K562 (cell line): ENCODE measurements at regions of chr1 and their contacts with region 1.

Region 1: GRCh38 chr1:26138974-26139558 is 19.8 kb upstream of the FAM110D start:
- DNase-seq: peak in 3 of 4 experiments; percentile 46 to 67 (median 55)
- ATAC-seq: peak; percentile 80
- H3K4me3 ChIP-seq: no peak overlapping the region
- H3K27ac ChIP-seq: peak overlapping the region; percentile 74
- H3K4me1 ChIP-seq: peaks cover 14 to 23% of the 10 kb centered on the region in 2 experiments; a peak in 4 of 5 replicates
- H3K27me3 ChIP-seq: no peaks in the 10 kb centered on the region
- CTCF ChIP-seq: no peak
- EP300 ChIP-seq: no peak
- POLR2A ChIP-seq: no peak
- RAD21 ChIP-seq: no peak

Region 2: GRCh38 chr1:24946861-24947658 is 1192.0 kb before region 1 on chr1:
- CTCF ChIA-PET with region 1: no interaction called
- POLR2A ChIA-PET with region 1: no interaction called
- in situ Hi-C with region 1: no loop called
- intact Hi-C with region 1: no loop called
- DNase-seq: no peak
- ATAC-seq: no peak; the same call in 2 of the 3 replicates
- H3K4me3 ChIP-seq: no peak overlapping the region
- H3K27ac ChIP-seq: no peak overlapping the region
- H3K4me1 ChIP-seq: peaks cover 1 to 7% of the 10 kb centered on the region in 2 experiments; a peak in 4 of 5 replicates
- H3K27me3 ChIP-seq: peaks cover 6 to 27% of the 10 kb centered on the region in 2 experiments; a peak in 4 of 5 replicates
- CTCF ChIP-seq: no peak
- EP300 ChIP-seq: no peak
- POLR2A ChIP-seq: no peak
- RAD21 ChIP-seq: no peak

Region 3: DNA sequence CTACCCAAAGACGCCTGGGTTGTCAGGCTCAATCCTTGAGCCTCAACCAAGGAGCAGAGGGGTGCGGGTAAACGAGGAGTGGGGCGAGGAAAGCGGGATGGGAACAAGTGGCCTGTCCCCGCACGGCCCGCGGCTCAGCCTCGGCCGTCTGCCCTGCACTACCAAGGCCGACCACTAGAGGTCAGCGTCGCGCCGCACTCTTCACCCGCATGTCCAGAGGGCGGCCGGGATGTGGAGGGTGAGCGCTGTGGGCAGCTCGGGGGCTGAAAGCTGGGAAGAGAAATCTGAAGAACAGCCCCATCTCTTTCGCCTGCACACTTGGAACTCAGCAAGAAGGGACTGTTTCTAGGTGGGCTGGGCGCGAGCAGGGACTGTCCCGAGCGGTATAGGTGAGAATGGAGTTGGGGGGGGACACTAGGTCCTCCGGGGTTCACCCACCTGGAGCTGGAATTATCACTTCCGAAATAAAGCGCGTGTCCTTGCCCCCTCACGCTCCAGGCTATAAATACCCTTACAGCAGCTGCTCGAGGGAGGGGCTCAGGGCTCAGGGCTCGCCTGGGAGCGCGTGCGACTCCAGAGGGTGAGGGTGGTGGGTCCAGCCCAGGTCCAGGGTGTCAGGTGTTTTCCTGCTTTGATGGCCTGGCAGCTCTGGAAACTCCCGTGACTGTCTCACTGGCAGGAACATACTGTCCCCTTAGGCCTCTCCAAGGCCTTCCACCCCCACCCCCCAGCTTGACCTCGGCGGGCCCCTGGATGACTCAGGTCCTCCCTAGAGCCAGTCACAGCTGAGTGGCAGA is 102.9 kb before region 1 on chr1:
- CTCF ChIA-PET with region 1: interaction called, 65 read pairs
- POLR2A ChIA-PET with region 1: interaction called, 14 read pairs
- in situ Hi-C with region 1: no loop called
- intact Hi-C with region 1: no loop called
- DNase-seq: peak; percentile 91 to 94 (median 92)
- ATAC-seq: peak; percentile 92
- H3K4me3 ChIP-seq: peak overlapping the region; percentile 77
- H3K27ac ChIP-seq: peak overlapping the region; percentile 87
- H3K4me1 ChIP-seq: peaks cover 25 to 57% of the 10 kb centered on the region in 2 experiments
- H3K27me3 ChIP-seq: no peaks in the 10 kb centered on the region
- CTCF ChIP-seq: peak; percentile 97 to 99 (median 98)
- EP300 ChIP-seq: no peak; the same call in 1 of the 2 replicates
- POLR2A ChIP-seq: no peak
- RAD21 ChIP-seq: peak; percentile 99

Region 4: GRCh38 chr1:26083246-26083645 is 55.8 kb before region 1 on chr1:
- CTCF ChIA-PET with region 1: no interaction called
- POLR2A ChIA-PET with region 1: no interaction called
- in situ Hi-C with region 1: no loop called
- intact Hi-C with region 1: no loop called
- DNase-seq: no peak
- ATAC-seq: peak; percentile 11; the same call in 1 of the 3 replicates
- H3K4me3 ChIP-seq: no peak overlapping the region
- H3K27ac ChIP-seq: no peak overlapping the region
- H3K4me1 ChIP-seq: peaks cover 16 to 42% of the 10 kb centered on the region in 2 experiments
- H3K27me3 ChIP-seq: no peaks in the 10 kb centered on the region
- CTCF ChIP-seq: no peak
- EP300 ChIP-seq: no peak
- POLR2A ChIP-seq: no peak
- RAD21 ChIP-seq: no peak

Region 5: DNA sequence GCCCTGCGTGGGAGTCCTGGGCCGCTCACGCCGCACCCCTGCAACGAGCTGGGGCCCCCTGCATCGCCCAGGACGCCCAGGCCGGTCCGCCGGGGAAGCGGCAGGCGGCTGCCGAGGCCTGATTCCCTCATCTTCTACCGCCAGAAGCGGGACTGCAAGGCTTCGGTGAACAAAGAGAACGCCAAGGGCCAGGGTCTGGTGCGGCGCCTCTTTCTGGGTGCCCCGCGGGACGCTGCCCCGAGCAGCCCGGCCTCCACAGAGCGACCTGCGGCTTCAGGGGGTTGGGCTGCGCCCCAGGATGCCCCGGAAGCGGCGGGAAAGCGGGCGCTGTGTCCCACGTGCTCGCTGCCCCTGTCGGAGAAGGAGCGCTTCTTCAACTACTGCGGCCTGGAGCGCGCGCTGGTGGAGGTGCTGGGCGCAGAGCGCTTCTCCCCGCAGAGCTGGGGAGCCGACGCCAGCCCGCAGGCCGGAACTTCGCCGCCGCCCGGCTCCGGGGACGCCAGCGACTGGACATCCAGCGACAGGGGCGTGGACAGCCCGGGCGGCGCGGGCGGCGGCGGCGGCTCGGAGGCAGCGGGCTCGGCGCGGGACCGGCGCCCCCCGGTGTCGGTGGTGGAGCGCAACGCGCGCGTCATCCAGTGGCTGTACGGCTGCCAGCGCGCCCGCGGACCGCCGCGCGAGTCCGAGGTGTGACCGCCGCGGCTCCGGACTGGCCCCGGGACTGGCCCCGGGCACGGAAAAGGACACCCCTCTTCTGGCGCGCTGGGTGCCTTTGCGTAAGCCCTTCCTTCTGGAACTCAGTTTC is 22.6 kb after region 1 on chr1:
- CTCF ChIA-PET with region 1: interaction called, 4 read pairs
- POLR2A ChIA-PET with region 1: interaction called, 13 read pairs
- in situ Hi-C with region 1: no loop called
- intact Hi-C with region 1: no loop called
- DNase-seq: peak; percentile 89 to 95 (median 92)
- ATAC-seq: peak; percentile 86
- H3K4me3 ChIP-seq: peak overlapping the region; percentile 43
- H3K27ac ChIP-seq: peak overlapping the region; percentile 80
- H3K4me1 ChIP-seq: peaks cover 29 to 58% of the 10 kb centered on the region in 2 experiments
- H3K27me3 ChIP-seq: no peaks in the 10 kb centered on the region
- CTCF ChIP-seq: peak; percentile 27 to 73 (median 63); a peak in 4 of 6 replicates
- EP300 ChIP-seq: peak; percentile 4; the same call in 1 of the 2 replicates
- POLR2A ChIP-seq: peak; percentile 81
- RAD21 ChIP-seq: peak; percentile 60 to 84